Posterior cingulate gyrus (tissue), 11 donors: ENCODE measurements at regions of chr1 and their contacts with region 1.

Region 1: DNA sequence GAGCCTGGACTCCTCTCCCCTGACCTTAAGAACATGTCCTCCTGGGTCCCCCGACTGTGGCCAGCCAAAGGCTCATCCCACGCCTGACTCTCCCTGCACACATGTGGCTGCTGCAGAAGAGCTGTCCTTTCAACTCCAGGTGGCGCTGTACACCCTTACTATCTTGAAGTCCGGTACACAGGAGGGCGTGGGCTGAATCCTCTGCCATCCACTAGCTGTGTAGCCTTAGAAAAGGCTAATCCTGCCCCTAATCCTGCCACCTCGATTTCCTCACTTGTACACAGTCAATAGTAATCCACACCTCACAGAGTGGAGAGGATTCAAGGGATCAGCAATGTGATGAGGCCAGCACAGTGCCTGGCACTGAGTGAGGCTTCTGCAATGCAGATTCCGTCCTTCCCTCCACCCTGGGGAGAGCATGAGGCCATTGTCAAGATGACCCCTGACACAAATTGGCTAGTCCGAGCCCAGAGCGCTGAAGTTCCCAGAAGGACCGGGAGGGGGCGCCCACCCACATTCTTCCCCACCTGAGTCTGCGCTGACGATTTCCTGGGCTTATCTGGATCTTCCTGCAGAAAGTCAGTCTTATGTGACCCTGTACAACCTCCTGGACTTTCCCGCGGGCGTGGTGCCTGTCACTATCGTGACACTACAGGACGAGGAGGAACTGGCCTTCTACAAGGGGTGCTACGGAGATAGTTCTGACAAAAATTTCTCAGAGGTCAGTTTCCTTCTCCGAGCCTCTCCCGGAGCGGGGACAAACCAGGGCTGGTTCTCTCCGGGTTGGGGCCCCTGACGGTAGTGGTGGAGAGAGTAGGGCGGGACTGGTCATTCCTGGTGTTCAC is 47.1 kb upstream of the DMBX1 start:
- DNase-seq: peak; percentile 27 to 93 (median 70)

Region 2: DNA sequence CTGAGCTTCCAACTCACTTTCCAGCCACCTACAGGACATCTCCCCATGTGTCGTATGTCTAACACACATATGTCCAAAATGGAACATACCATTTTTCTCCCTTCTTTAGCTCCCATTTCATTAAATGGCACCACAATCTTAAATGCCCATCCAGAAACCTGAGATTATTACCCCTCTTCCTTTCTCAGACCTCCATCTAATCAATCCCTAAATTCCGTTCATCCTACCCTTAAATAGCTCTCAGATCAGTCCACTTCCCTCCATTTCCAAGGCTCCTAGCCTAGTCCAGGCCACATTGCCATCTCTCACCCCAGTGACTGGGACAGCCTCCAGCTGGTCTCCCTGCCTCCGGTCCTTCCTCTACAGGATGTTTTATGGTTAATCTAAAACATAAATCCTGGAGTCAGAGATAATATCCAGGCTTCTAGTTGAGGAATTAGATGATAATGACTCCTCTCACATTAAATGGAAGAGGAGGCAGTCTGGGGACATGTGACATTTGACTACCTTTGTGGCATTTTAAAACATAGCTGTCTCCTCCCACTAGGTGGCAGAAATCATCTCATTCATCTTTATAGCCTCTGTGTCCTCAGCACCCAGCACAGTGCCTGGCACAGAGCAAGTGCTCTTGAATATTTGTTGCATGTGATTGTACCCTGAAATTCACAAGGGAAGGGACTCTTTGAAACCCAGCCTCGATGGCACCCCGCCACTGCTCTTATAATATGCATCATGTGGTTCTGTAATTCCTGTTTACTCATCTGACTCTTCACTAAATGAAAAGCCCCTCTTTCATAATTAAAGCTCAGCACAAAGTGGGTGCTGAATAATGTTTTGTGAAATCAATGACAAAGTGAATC is 1870.6 kb before region 1 on chr1:
- intact Hi-C with region 1: no loop called
- DNase-seq: peak in 2 of 10 donors; percentile 35 to 80

Region 3: DNA sequence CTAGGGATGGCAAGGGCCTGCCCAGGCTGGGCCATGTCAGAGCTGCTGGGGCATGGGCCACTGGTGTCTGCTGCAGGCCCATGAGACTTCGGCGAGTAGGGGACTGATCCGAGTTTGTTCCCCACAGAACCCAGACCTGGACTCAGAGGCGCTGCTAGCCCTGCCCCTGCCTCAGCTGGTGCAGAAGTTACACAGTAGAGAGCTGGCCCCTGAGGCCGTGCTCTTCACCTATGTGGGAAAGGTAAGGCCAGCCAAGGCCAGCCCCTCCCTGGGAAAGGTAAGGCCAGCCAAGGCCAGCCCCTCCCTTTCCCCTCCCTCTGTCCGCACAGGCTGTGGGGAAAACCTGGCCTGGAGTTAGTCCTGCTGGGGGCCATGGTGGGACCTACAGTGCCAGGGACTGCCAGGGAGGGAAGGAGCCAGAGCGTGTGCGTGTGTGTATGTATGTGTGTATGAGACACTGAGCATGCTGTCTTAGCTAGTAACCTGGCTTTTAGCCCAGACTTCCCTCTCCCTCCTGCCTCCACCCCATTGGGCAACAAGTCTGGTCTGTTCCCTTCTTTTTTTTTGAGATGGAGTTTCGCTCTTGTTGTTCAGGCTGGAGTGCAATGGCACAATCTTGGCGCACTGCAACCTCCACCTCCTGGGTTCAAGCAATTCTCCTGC is 40.4 kb before region 1 on chr1:
- intact Hi-C with region 1: loop called (anchors 5 kb)
- DNase-seq: peak; percentile 62 to 98 (median 83)